Activated B cell treated with CpG ODN at 0.5 μM for 24 hours (primary cell): ENCODE measurements at regions of chr20 and their contacts with region 1.

Region 1: DNA sequence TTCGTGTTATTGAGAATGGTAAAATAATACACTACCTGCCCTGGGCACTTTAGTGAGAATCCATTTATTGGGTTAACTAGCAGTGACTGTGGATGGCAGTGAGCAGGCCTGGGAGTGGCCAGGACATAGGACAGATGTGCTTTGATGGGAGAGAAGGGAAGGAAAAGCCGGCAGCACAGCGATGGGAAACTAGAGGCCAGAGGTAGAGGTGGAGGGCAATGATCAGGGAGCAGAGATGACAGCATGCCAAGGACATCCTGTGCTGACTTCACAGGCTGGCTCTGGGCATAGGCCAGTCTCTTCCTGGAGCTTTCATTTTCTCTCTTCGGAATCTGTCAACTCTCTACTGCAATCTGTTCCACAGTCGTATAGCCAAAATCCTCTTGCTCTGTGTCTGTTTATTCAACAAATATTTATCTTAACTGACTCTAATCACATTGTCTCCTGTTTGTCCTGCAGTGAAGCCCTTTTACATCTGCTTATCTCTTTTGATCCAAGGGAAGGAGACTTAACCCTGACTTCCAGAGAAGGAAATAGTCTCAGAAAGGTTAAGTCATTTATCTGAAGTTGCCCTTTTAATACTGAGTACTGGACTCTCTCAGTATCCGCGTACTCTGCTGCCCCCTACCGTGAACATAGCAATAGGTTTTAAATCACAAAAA is 18.4 kb upstream of the MMP24 start:
- DNase-seq: peak; percentile 42
- ATAC-seq: peak; percentile 85
- H3K4me3 Mint-ChIP-seq: no peak overlapping the region
- H3K27ac Mint-ChIP-seq: no peak overlapping the region
- H3K4me1 Mint-ChIP-seq: no peaks in the 10 kb centered on the region
- H3K27me3 Mint-ChIP-seq: no peaks in the 10 kb centered on the region
- CTCF ChIP-seq: no peak

Region 2: DNA sequence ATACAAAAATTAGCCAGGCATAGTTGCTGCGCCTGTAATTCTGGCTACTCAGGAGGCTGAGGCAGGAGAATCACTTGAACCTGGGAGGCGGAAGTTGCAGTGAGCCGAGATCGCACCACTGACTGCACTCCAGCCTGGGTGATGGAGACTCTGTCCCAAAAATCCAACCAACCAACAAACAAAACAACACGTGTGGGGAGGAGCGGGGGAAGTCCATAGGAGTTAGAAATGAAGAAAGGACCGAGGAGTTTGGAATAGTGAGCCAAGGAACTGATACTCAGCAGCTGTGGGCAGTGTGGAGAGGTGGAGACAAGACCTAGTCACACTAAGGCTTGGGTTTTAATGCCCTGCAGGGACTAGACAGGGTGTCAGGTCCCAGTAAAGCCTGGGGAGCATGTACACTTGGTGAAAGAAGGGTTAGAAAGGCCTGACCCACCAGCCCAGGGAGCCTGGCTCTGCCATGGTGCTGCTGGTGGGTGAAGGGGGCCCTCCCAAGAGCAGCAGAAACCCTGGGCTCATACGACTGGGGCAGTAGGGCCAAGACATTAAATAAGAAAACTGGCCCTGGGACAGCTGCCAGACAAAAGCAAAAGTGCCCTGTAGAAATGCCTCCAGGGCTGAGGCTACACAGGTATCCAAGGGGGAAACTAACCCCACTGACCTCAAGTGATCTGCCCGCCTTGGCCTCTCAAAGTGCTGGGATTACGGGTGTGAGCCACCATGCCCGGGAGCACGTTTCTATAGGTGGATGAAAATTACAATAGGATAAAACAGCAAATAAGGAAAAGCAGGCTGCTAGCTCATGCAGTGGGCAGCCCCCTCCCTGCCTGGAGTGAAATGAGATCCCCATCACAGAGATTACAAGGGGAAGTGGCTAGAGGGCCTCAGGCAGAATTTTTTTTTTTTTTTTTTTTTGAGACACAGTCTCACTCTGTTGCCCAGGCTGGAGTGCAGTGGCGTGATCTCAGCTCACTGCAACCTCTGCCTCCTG is 194.4 kb before region 1 on chr20:
- CTCF ChIA-PET with region 1: no interaction called
- POLR2A ChIA-PET with region 1: no interaction called
- intact Hi-C with region 1: loop called (anchors 10 kb)
- DNase-seq: no peak
- ATAC-seq: peak; percentile 45
- H3K4me3 Mint-ChIP-seq: no peak overlapping the region
- H3K27ac Mint-ChIP-seq: peak overlapping the region; percentile 79
- H3K4me1 Mint-ChIP-seq: peaks cover 20% of the 10 kb centered on the region
- H3K27me3 Mint-ChIP-seq: no peaks in the 10 kb centered on the region
- CTCF ChIP-seq: no peak

Region 3: DNA sequence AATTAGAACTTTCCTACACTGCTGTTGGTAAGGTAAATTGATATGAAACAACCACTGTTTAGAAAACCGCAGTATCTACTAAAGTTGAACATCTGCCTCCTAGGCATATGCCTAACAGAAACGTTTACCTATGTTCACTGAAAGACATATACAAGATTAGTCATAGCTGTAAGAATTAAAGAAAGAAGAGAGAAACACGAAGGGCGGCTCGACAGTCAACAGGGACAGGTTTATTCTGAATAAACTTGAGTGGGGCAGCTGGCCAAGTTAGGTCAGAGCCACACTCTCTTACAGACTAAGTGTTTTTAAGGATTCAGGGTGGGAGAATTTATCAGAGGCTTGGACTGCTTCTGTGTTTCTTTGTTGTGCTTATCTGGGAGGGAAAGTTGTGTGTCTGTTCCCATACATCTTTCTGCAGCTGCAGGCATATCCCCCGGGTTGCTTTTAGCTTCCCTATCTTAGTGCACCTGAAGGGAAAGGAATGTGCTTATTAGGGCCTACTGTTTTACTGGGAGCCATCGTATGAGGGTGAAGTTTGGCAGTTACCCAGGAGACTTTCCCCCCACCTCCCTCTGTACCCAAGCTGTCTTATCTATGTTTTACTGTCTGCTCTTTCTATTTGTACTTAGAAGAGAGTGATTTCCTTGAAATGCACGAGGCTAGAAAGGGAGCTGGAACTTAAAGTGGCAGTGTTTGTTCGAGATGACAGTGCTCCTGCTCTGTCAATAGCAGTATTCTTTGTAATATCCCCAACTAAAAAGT is 15.8 kb before region 1 on chr20:
- CTCF ChIA-PET with region 1: no interaction called
- POLR2A ChIA-PET with region 1: no interaction called
- intact Hi-C with region 1: no loop called
- DNase-seq: no peak
- ATAC-seq: no peak
- H3K4me3 Mint-ChIP-seq: no peak overlapping the region
- H3K27ac Mint-ChIP-seq: no peak overlapping the region
- H3K4me1 Mint-ChIP-seq: no peaks in the 10 kb centered on the region
- H3K27me3 Mint-ChIP-seq: no peaks in the 10 kb centered on the region
- CTCF ChIP-seq: no peak

Region 4: GRCh38 chr20:36709126-36709525 is 1501.0 kb after region 1 on chr20:
- CTCF ChIA-PET with region 1: no interaction called
- POLR2A ChIA-PET with region 1: no interaction called
- intact Hi-C with region 1: no loop called
- DNase-seq: no peak
- ATAC-seq: no peak
- H3K4me3 Mint-ChIP-seq: no peak overlapping the region
- H3K27ac Mint-ChIP-seq: no peak overlapping the region
- H3K4me1 Mint-ChIP-seq: no peaks in the 10 kb centered on the region
- H3K27me3 Mint-ChIP-seq: no peaks in the 10 kb centered on the region
- CTCF ChIP-seq: no peak